PC-9 (cell line): ENCODE measurements at regions of chr2 and their contacts with region 1.

Region 1: GRCh38 chr2:235390103-235390812 is 103.6 kb upstream of the AGAP1 start:
- DNase-seq: peak in 1 of 2 experiments; percentile 67
- H3K4me3 ChIP-seq: no peak overlapping the region
- H3K27ac ChIP-seq: no peak overlapping the region
- H3K4me1 ChIP-seq: peaks cover 27% of the 10 kb centered on the region
- H3K27me3 ChIP-seq: no peaks in the 10 kb centered on the region
- CTCF ChIP-seq: no peak

Region 2: GRCh38 chr2:235135990-235136561 is 254.2 kb before region 1 on chr2:
- CTCF ChIA-PET with region 1: no interaction called
- POLR2A ChIA-PET with region 1: no interaction called
- intact Hi-C with region 1: loop called (anchors 1 kb)
- DNase-seq: peak; percentile 78 to 86
- H3K4me3 ChIP-seq: no peak overlapping the region
- H3K27ac ChIP-seq: no peak overlapping the region
- H3K4me1 ChIP-seq: no peaks in the 10 kb centered on the region
- H3K27me3 ChIP-seq: no peaks in the 10 kb centered on the region
- CTCF ChIP-seq: peak; percentile 94

Region 3: GRCh38 chr2:235324324-235324723 is 65.9 kb before region 1 on chr2:
- CTCF ChIA-PET with region 1: no interaction called
- POLR2A ChIA-PET with region 1: no interaction called
- intact Hi-C with region 1: loop called (anchors 1 kb)
- DNase-seq: no peak
- H3K4me3 ChIP-seq: no peak overlapping the region
- H3K27ac ChIP-seq: no peak overlapping the region
- H3K4me1 ChIP-seq: no peaks in the 10 kb centered on the region
- H3K27me3 ChIP-seq: no peaks in the 10 kb centered on the region
- CTCF ChIP-seq: no peak

Region 4: GRCh38 chr2:235444101-235444617 is 53.9 kb after region 1 on chr2:
- CTCF ChIA-PET with region 1: no interaction called
- POLR2A ChIA-PET with region 1: no interaction called
- intact Hi-C with region 1: loop called (anchors 1 kb)
- DNase-seq: peak; percentile 86 to 97
- H3K4me3 ChIP-seq: peak overlapping the region; percentile 16; the same call in 1 of the 2 replicates
- H3K27ac ChIP-seq: peak overlapping the region; percentile 89
- H3K4me1 ChIP-seq: peaks cover 11% of the 10 kb centered on the region
- H3K27me3 ChIP-seq: no peaks in the 10 kb centered on the region
- CTCF ChIP-seq: no peak

Region 5: DNA sequence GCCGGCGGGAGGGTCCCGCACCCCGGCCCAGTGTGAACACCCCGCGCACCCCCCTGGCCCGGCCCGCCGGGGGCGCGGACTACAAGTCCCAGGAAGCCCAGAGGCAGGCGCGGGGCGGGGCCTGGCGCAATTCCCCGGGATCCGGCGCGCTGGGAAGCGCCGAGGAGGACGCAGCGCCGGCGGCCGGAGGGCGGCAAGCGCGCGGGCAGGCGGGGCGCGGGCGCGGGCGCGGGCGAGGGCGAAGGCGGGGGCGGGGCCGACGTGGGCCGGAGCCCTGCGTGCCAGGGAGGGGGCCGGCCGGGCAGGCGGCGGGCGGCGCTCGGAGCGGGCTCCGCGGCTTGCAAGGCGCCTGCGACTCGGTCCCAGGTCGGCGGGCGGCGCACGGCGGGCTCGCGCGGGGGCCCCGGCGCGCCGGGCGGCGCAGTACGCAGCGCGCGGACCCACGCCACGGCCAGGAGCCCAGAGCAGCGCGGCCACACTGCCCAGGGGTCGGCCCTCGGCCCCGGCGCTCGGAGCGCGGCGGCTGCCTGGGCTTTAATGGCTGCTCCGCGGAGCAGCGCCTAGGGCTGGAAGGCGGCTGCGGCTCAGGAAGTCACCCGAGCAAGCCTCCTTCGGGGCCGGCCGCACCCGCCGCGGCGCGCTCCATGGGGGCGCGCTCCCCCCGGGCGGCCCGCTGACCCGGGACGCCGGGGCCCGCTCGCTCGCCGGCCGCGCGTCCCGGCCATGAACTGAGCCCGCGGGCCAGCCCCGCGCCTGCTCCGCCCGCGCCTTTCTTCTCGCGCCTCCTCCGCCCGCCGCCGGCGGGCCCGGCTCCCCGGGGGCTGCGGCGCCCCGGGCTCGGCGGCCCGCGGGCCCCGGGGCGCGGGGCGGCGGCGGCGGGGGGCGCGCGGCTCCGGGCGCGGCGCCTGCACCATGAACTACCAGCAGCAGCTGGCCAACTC is 103.8 kb after region 1 on chr2 and contains the start of gene AGAP1:
- CTCF ChIA-PET with region 1: no interaction called
- POLR2A ChIA-PET with region 1: no interaction called
- intact Hi-C with region 1: loop called (anchors 2 kb)
- DNase-seq: peak; percentile 75 to 97
- H3K4me3 ChIP-seq: peak within 1 kb of the TSS; percentile 77
- H3K27ac ChIP-seq: peak within 1 kb of the TSS; percentile 69
- H3K4me1 ChIP-seq: peaks cover 20% of the 10 kb centered on the region
- H3K27me3 ChIP-seq: no peaks in the 10 kb centered on the region
- CTCF ChIP-seq: no peak
- total RNA-seq, gene AGAP1: 91.4 and 107 TPM in 2 replicates

Region 6: GRCh38 chr2:235563051-235563910 is 173.0 kb after region 1 on chr2:
- CTCF ChIA-PET with region 1: no interaction called
- POLR2A ChIA-PET with region 1: no interaction called
- intact Hi-C with region 1: no loop called
- DNase-seq: no peak
- H3K4me3 ChIP-seq: no peak overlapping the region
- H3K27ac ChIP-seq: no peak overlapping the region
- H3K4me1 ChIP-seq: peaks cover 11% of the 10 kb centered on the region
- H3K27me3 ChIP-seq: no peaks in the 10 kb centered on the region
- CTCF ChIP-seq: no peak

Region 7: GRCh38 chr2:235577404-235578330 is 187.4 kb after region 1 on chr2:
- CTCF ChIA-PET with region 1: interaction called, 4 read pairs
- POLR2A ChIA-PET with region 1: no interaction called
- intact Hi-C with region 1: loop called (anchors 10 kb)
- DNase-seq: no peak
- H3K4me3 ChIP-seq: no peak overlapping the region
- H3K27ac ChIP-seq: no peak overlapping the region
- H3K4me1 ChIP-seq: peaks cover 26% of the 10 kb centered on the region
- H3K27me3 ChIP-seq: no peaks in the 10 kb centered on the region
- CTCF ChIP-seq: no peak